Endothelial cell of umbilical vein (primary cell): ENCODE measurements at regions of chr9 and their contacts with region 1.

Region 1: DNA sequence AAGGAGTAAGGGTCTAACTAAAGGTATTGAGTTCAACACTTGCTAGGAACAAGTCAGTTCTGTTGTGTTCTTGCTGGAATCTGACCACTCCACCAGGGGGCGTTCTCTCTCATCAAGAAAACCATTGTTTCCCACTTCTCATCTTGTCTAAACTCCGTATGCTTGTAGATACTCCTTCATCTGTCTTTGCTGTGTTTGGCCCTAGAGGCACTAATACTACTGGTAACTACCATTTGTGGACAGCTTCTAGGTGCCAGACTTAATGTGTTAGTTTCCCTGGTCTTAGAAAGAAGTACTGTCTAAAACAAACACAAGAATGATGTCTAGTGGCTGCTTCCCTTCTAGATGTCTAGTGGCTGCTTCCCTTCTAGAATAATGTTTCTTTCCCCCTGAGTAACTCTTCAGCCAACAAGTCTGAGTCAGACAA is 18.7 kb upstream of the PTPDC1 start:
- DNase-seq: peak; percentile 89
- H3K4me3 ChIP-seq: no peak overlapping the region
- H3K27ac ChIP-seq: no peak overlapping the region
- H3K4me1 ChIP-seq: peaks cover 4% of the 10 kb centered on the region
- H3K27me3 ChIP-seq: no peaks in the 10 kb centered on the region
- CTCF ChIP-seq: peak; percentile 73 to 80
- POLR2A ChIP-seq: no peak

Region 2: GRCh38 chr9:94173632-94174031 is 108.1 kb after region 1 on chr9:
- CTCF ChIA-PET with region 1: interaction called, 11 read pairs
- POLR2A ChIA-PET with region 1: interaction called, 3 read pairs
- dilution Hi-C with region 1: no loop called
- intact Hi-C with region 1: loop called (anchors 2 kb)
- DNase-seq: no peak
- H3K4me3 ChIP-seq: no peak overlapping the region
- H3K27ac ChIP-seq: no peak overlapping the region
- H3K4me1 ChIP-seq: peaks cover 61% of the 10 kb centered on the region
- H3K27me3 ChIP-seq: no peaks in the 10 kb centered on the region
- CTCF ChIP-seq: no peak
- POLR2A ChIP-seq: no peak